CD4-positive, alpha-beta memory T cell (primary cell): ENCODE measurements at regions of chr17 and their contacts with region 1.

Region 1: DNA sequence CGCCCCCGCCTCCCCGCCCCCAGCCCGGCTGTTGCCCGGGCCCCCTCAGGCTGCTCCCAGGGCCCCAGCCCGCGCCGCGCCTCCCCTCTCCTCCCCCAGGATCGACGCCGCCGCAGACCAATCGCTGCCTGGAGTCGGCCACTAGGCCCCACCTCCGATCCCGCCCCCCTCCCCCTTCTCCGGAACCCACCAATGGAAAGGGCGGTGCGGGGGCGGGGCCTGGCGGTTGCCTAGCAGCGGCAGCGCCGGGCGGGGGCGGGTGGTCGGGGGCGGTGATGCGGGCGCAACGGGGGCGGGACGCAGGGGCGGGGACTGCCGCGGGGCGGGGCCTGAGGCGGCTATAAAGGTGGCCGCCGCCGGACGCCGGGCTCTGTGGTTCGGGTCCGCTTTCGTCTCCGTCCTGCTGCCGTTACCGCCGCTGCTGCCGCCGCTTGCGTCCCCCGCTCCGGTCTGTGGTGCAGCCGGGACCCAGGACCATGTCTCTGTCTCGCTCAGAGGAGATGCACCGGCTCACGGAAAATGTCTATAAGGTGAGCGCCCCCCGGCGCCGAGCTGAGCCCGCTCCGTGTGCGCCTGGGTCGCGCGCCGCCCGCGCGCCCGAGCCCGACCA is at the start of gene BAIAP2:
- DNase-seq: peak; percentile 93
- H3K4me3 ChIP-seq: peak within 1 kb of the TSS in 1 of 2 donors; percentile 49
- H3K4me3 Mint-ChIP-seq: peak within 1 kb of the TSS; percentile 88 to 95 (median 92)
- H3K27ac ChIP-seq: no peak within 1 kb of the TSS
- H3K27ac Mint-ChIP-seq: peak within 1 kb of the TSS; percentile 86 to 93 (median 89)
- H3K4me1 ChIP-seq: peaks cover 20% of the 10 kb centered on the region
- H3K4me1 Mint-ChIP-seq: peaks cover 8 to 30% (median 14%) of the 10 kb centered on the region in 4 donors
- H3K27me3 ChIP-seq: no peaks in the 10 kb centered on the region
- H3K27me3 Mint-ChIP-seq: peaks cover 0 to 13% of the 10 kb centered on the region in 2 donors
- total RNA-seq, gene BAIAP2: 5.4 to 7.2 TPM

Region 2: GRCh38 chr17:80991645-80992076 is 43.2 kb before region 1 on chr17 and contains the start of gene CHMP6:
- CTCF ChIA-PET with region 1: no interaction called
- POLR2A ChIA-PET with region 1: interaction called, 3 read pairs
- intact Hi-C with region 1: loop called (anchors 1 kb)
- DNase-seq: peak; percentile 69 to 82 (median 78)
- H3K4me3 ChIP-seq: peak within 1 kb of the TSS; percentile 52 to 63
- H3K4me3 Mint-ChIP-seq: peak within 1 kb of the TSS; percentile 79 to 86 (median 84)
- H3K27ac ChIP-seq: peak within 1 kb of the TSS; percentile 70
- H3K27ac Mint-ChIP-seq: peak within 1 kb of the TSS; percentile 66 to 91 (median 86)
- H3K4me1 ChIP-seq: peaks cover 33% of the 10 kb centered on the region
- H3K4me1 Mint-ChIP-seq: peaks cover 9 to 34% (median 21%) of the 10 kb centered on the region in 4 donors
- H3K27me3 ChIP-seq: no peaks in the 10 kb centered on the region
- H3K27me3 Mint-ChIP-seq: peaks cover 0 to 1% of the 10 kb centered on the region in 2 donors
- total RNA-seq, gene CHMP6: 41.4 to 42.3 TPM